Activated B cell treated with CpG ODN at 0.5 μM for 24 hours (primary cell): ENCODE measurements at regions of chr20 and their contacts with region 1.

Region 1: DNA sequence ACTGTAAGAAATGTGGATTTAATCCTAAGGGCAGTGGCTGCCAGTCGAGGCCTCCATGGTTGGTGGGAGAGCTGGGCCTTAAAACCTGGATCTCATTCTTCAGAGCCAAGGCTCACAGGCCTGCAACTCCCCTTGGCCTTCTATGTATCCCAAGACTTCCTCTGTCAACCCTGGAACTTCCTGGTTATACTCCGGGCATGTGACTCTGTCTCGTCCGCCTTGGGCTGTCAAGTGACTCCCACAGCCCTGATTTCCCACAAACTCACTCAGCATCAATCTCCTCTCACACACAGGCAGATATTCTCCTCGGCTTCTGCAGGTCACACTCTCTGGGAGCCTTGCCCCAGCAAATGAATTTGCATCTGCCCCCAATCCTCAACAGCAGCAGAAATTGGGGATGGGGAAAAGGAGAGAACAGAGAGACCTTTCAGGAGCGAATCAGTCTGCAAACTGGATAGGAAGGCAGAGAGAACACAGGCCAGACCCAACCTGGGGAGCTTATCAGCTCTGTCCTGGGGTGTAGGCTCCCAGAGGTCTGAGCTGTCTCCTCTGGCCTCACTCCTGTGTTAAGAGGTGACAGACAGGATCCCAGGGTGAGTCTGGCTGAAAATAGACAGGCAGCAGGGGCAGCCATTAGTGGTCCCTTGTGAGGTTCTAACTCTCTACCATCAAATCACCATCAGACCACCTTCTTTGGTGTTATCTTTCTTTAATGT is 30.4 kb upstream of the PREX1 start:
- DNase-seq: no peak
- ATAC-seq: no peak
- H3K4me3 Mint-ChIP-seq: no peak overlapping the region
- H3K27ac Mint-ChIP-seq: no peak overlapping the region
- H3K4me1 Mint-ChIP-seq: peaks cover 48% of the 10 kb centered on the region
- H3K27me3 Mint-ChIP-seq: no peaks in the 10 kb centered on the region
- CTCF ChIP-seq: no peak

Region 2: DNA sequence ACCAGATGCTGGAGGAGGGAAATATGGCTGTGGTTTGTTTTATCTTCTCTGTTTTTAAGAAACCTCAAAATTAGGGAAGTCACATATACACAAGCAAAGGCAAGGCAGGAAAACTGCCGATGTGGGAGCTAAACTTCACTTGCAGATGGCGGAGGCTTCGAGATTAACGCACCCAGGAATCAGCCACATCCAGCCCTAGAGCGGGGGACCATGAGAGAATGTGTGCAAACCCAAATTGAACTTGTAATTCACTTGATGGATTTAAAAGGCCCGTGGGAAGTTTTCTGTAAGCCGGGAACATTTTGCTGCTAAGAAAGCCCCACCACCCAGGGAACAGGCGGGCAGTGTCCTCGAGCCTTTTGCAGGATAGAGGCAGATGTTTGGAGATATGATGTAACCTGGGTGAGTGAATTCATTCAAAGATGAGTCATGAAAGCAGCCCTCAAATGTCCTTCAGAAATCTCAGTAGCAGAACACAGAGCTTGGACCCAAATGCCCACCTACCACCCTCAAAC is 70.3 kb before region 1 on chr20:
- CTCF ChIA-PET with region 1: no interaction called
- POLR2A ChIA-PET with region 1: no interaction called
- intact Hi-C with region 1: no loop called
- DNase-seq: peak; percentile 18
- ATAC-seq: peak; percentile 16
- H3K4me3 Mint-ChIP-seq: peak overlapping the region; percentile 21
- H3K27ac Mint-ChIP-seq: peak overlapping the region; percentile 88
- H3K4me1 Mint-ChIP-seq: no peaks in the 10 kb centered on the region
- H3K27me3 Mint-ChIP-seq: no peaks in the 10 kb centered on the region
- CTCF ChIP-seq: no peak

Region 3: DNA sequence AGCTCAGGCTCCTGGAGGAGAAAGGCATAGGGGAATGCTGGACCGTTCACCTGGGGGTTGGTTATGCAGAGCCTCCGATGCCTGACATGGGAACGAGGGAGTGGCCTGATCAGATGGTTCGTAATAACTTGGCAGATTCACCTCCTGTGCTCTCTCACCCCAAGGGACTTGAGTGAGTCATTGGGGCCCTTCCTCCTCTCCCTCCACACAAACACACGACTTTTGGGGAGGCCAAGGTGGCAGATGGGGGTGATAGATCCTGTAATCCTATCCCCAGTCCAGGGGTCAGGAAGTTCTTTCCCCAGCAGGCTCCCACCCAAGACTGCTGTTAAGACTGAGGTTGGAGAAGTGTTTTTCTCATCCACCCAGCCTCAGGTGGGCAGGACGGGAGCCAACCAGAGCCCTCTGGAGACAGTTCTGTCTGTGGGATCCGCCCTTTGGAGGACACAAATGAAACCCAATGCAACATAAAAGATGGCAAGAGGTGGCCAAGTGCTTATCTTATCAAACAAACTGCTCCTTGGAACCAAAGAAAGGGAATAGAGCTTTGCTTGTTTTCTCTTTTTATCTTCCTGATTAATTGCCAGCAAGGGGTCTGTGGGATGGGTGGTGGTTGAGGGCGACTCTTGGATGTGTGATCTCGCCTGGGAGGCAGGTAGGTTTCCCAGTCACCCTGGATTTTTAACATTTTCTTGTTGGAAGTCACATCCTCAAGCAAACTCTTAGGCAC is 17.8 kb after region 1 on chr20:
- CTCF ChIA-PET with region 1: no interaction called
- POLR2A ChIA-PET with region 1: no interaction called
- intact Hi-C with region 1: loop called (anchors 2 kb)
- DNase-seq: peak; percentile 25
- ATAC-seq: peak; percentile 84
- H3K4me3 Mint-ChIP-seq: no peak overlapping the region
- H3K27ac Mint-ChIP-seq: peak overlapping the region; percentile 36
- H3K4me1 Mint-ChIP-seq: peaks cover 44% of the 10 kb centered on the region
- H3K27me3 Mint-ChIP-seq: no peaks in the 10 kb centered on the region
- CTCF ChIP-seq: no peak